ENCODE measurements at regions of chrX and their contacts with region 1.

Region 1: GRCh38 chrX:17689971-17690409 is 47.3 kb upstream of the SCML1 start:
- DNase-seq: peak; percentile 77
- ATAC-seq: peak; percentile 94
- H3K4me3 ChIP-seq: no peak overlapping the region
- H3K27ac ChIP-seq: no peak overlapping the region
- H3K4me1 ChIP-seq: peaks cover 19% of the 10 kb centered on the region
- H3K27me3 ChIP-seq: no peaks in the 10 kb centered on the region
- CTCF ChIP-seq: peak; percentile 81

Region 2: GRCh38 chrX:17120816-17121215 is 569.2 kb before region 1 on chrX:
- CTCF ChIA-PET with region 1: no interaction called
- POLR2A ChIA-PET with region 1: no interaction called
- intact Hi-C with region 1: loop called (anchors 1 kb)
- DNase-seq: no peak
- ATAC-seq: no peak
- H3K4me3 ChIP-seq: no peak overlapping the region
- H3K27ac ChIP-seq: no peak overlapping the region
- H3K4me1 ChIP-seq: no peaks in the 10 kb centered on the region
- H3K27me3 ChIP-seq: no peaks in the 10 kb centered on the region
- CTCF ChIP-seq: no peak

Region 3: DNA sequence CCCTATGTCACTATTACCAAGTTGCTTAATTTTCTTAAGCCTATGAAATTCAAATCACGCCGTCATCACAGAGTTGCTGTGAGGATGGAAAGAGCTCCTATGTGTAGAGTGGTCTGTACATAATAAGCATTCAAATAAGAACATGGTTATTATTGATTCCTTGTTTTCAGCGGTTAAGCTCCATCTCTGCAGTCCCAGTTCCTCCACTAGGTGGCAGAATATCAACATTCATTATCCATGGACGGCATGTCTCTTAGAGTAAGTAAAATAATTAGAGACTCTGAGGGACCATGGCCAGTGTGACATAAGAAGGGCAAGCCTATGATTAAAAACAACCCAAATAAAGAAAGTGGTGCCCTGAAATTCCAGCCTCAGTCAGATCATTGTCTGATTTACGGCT is 447.5 kb before region 1 on chrX:
- CTCF ChIA-PET with region 1: no interaction called
- POLR2A ChIA-PET with region 1: no interaction called
- intact Hi-C with region 1: loop called (anchors 1 kb)
- DNase-seq: peak; percentile 78
- ATAC-seq: peak; percentile 78
- H3K4me3 ChIP-seq: no peak overlapping the region
- H3K27ac ChIP-seq: no peak overlapping the region
- H3K4me1 ChIP-seq: no peaks in the 10 kb centered on the region
- H3K27me3 ChIP-seq: no peaks in the 10 kb centered on the region
- CTCF ChIP-seq: peak; percentile 83

Region 4: DNA sequence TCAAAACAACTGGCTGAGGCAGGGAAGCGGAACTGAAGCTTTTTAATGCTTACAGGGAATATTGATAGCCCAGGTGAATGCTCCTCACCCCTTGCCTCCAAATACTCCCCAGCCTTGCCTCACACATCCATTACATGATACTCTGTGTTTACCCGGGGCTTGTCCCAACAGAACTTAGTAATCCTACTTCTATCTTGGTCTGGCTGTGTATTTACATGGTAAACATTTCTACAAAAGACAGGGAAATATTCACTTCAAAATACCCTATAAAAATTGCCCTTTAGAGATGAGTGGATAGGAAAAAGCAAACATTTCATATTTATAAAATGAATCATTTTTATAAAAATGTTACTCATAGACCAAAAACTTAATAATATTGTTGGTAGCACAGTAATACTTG is 194.9 kb before region 1 on chrX:
- CTCF ChIA-PET with region 1: no interaction called
- POLR2A ChIA-PET with region 1: no interaction called
- intact Hi-C with region 1: loop called (anchors 1 kb)
- DNase-seq: peak; percentile 87
- ATAC-seq: peak; percentile 91
- H3K4me3 ChIP-seq: no peak overlapping the region; the same call in 1 of the 2 replicates
- H3K27ac ChIP-seq: peak overlapping the region; percentile 97
- H3K4me1 ChIP-seq: peaks cover 63% of the 10 kb centered on the region
- H3K27me3 ChIP-seq: no peaks in the 10 kb centered on the region
- CTCF ChIP-seq: no peak

Region 5: DNA sequence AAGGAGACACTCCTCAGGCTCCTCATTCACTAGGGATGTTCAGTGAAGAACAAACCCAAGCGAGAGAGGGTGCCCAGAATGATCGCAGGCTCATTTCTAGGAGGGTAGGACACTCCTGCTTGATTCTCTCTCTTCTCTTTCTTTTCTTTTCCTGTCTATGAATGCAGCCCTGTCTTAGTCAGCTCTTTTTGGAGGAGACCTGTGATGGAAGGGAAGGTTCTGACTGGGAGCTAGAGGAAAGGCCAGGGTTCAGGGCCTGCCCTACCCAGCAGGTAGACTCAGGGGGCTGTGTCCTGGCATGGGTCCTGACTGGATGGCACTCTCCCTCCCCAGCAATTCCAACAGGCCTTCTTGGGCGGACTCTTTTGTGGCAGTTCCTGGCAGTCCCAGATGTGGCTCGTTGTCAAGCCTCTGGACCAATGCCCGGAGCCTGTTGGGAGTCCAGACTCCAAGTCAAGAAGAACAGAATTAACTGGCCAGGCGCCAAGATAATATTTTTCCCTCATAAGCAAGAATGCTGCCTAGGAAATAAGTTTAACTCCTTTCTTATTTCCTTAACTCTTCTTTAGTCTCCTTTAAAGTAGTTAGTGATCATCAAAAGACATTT is 92.1 kb before region 1 on chrX:
- CTCF ChIA-PET with region 1: no interaction called
- POLR2A ChIA-PET with region 1: no interaction called
- intact Hi-C with region 1: loop called (anchors 1 kb)
- DNase-seq: no peak
- ATAC-seq: no peak
- H3K4me3 ChIP-seq: no peak overlapping the region
- H3K27ac ChIP-seq: no peak overlapping the region
- H3K4me1 ChIP-seq: peaks cover 23% of the 10 kb centered on the region
- H3K27me3 ChIP-seq: no peaks in the 10 kb centered on the region
- CTCF ChIP-seq: no peak

Region 6: GRCh38 chrX:17725181-17725580 is 35.2 kb after region 1 on chrX:
- CTCF ChIA-PET with region 1: no interaction called
- POLR2A ChIA-PET with region 1: no interaction called
- intact Hi-C with region 1: no loop called
- DNase-seq: peak; percentile 15
- ATAC-seq: no peak
- H3K4me3 ChIP-seq: no peak overlapping the region
- H3K27ac ChIP-seq: no peak overlapping the region
- H3K4me1 ChIP-seq: no peaks in the 10 kb centered on the region
- H3K27me3 ChIP-seq: no peaks in the 10 kb centered on the region
- CTCF ChIP-seq: no peak

Region 7: GRCh38 chrX:17744896-17745523 is 55.0 kb after region 1 on chrX:
- CTCF ChIA-PET with region 1: no interaction called
- POLR2A ChIA-PET with region 1: no interaction called
- intact Hi-C with region 1: no loop called
- DNase-seq: peak; percentile 39
- ATAC-seq: no peak
- H3K4me3 ChIP-seq: no peak overlapping the region
- H3K27ac ChIP-seq: no peak overlapping the region
- H3K4me1 ChIP-seq: peaks cover 29% of the 10 kb centered on the region
- H3K27me3 ChIP-seq: no peaks in the 10 kb centered on the region
- CTCF ChIP-seq: peak; percentile 67

Measured in PC-3 (cell line).